MCF 10A (cell line): ENCODE measurements at regions of chr10 and their contacts with region 1.

Region 1: DNA sequence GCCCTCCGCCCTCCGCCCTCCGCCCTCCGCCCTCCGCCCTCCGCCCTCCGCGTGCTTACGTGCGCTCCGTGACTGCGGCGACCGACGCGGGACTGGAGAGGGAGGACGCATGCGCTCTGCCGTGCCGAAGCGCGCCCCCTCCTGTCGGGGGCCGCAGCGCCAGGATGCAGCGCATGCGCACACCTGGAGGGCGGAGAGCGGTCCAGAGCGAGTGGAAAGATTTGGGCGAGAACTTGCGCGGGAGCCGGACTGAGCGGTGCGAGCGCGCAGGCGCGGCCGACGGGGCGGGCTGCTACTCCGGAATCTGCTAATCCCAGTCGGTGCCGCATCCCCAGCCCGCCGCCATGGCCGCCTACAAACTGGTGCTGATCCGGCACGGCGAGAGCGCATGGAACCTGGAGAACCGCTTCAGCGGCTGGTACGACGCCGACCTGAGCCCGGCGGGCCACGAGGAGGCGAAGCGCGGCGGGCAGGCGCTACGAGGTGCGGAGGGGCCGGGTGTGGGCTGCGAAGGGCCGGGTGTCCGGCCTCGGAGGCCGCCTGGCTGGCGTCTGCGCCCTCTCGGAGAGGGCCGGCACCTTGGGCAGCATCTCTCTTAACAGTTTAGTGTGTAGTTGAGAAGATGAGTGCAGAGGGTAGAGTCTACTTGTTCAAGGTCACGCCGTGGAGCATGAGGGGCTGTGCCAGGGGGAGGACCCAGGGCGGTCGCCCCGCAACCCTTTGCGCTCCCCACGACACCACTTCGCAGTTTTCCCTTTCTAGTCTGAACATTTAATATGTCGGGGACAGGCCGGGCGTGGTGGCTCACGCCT is at the start of gene PGAM1:
- DNase-seq: peak; percentile 95
- H3K4me3 Mint-ChIP-seq: peak within 1 kb of the TSS; percentile 77
- H3K27ac Mint-ChIP-seq: peak within 1 kb of the TSS; percentile 80
- H3K4me1 Mint-ChIP-seq: peaks cover 12% of the 10 kb centered on the region
- H3K27me3 Mint-ChIP-seq: no peaks in the 10 kb centered on the region
- CTCF ChIP-seq: peak; percentile 53
- total RNA-seq, gene PGAM1: 235 and 248 TPM in 2 replicates

Region 2: GRCh38 chr10:97407211-97407951 is 18.8 kb before region 1 on chr10:
- CTCF ChIA-PET with region 1: interaction called, 16 read pairs
- POLR2A ChIA-PET with region 1: interaction called, 15 read pairs
- intact Hi-C with region 1: loop called (anchors 1 kb)
- DNase-seq: peak; percentile 85
- H3K4me3 Mint-ChIP-seq: no peak overlapping the region
- H3K27ac Mint-ChIP-seq: no peak overlapping the region
- H3K4me1 Mint-ChIP-seq: no peaks in the 10 kb centered on the region
- H3K27me3 Mint-ChIP-seq: no peaks in the 10 kb centered on the region
- CTCF ChIP-seq: peak; percentile 76

Region 3: DNA sequence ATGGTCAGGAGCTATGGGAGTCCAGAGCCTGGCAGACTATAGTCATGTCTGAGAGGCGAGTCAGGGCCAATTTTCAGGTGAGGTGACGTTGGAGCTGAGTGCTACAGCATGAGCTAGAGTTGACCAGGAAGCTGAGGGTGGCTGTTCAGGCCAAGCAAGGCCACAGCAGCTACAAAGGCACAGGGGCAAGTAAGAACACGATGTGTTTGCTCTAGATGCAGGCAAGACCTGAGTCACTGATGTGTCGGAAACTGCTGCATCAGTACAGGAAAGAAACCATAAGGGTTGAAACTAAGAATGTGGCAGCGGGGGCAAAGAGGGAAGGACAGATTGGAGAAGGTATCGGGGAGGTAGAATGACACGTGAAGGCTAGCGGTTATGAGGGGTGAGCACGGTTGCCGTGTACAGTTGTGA is 13.3 kb before region 1 on chr10:
- CTCF ChIA-PET with region 1: interaction called, 16 read pairs
- POLR2A ChIA-PET with region 1: interaction called, 15 read pairs
- intact Hi-C with region 1: no loop called
- DNase-seq: peak; percentile 84
- H3K4me3 Mint-ChIP-seq: peak overlapping the region; percentile 13
- H3K27ac Mint-ChIP-seq: peak overlapping the region; percentile 92
- H3K4me1 Mint-ChIP-seq: peaks cover 8% of the 10 kb centered on the region
- H3K27me3 Mint-ChIP-seq: no peaks in the 10 kb centered on the region
- CTCF ChIP-seq: no peak

Region 4: GRCh38 chr10:97445722-97446639 is 19.8 kb after region 1 on chr10 and contains the starts of genes EXOSC1 and ZDHHC16:
- CTCF ChIA-PET with region 1: interaction called, 6 read pairs
- POLR2A ChIA-PET with region 1: interaction called, 34 read pairs
- intact Hi-C with region 1: no loop called
- DNase-seq: peak; percentile 97
- H3K4me3 Mint-ChIP-seq: peak within 1 kb of the TSS; percentile 99
- H3K27ac Mint-ChIP-seq: peak within 1 kb of the TSS; percentile 74
- H3K4me1 Mint-ChIP-seq: peaks cover 25% of the 10 kb centered on the region
- H3K27me3 Mint-ChIP-seq: no peaks in the 10 kb centered on the region
- CTCF ChIP-seq: no peak
- total RNA-seq, gene EXOSC1: 56.5 and 62.3 TPM in 2 replicates
- total RNA-seq, gene ZDHHC16: 44.9 and 48.0 TPM in 2 replicates